ENCODE measurements at regions of chr12 and their contacts with region 1.

Region 1: GRCh38 chr12:51172515-51173431 is at the start of gene TFCP2:
- DNase-seq: peak; percentile 98
- H3K4me3 Mint-ChIP-seq: peak within 1 kb of the TSS; percentile 80
- H3K27ac Mint-ChIP-seq: peak within 1 kb of the TSS; percentile 86
- H3K4me1 Mint-ChIP-seq: peaks cover 12% of the 10 kb centered on the region
- H3K27me3 Mint-ChIP-seq: no peaks in the 10 kb centered on the region
- total RNA-seq, gene TFCP2: 43.1 and 46.3 TPM in 2 replicates

Region 2: GRCh38 chr12:50353869-50354593 is 818.7 kb before region 1 on chr12:
- intact Hi-C with region 1: no loop called
- DNase-seq: no peak
- H3K4me3 Mint-ChIP-seq: no peak overlapping the region
- H3K27ac Mint-ChIP-seq: no peak overlapping the region
- H3K4me1 Mint-ChIP-seq: no peaks in the 10 kb centered on the region
- H3K27me3 Mint-ChIP-seq: peaks cover 4% of the 10 kb centered on the region

Region 3: GRCh38 chr12:51217968-51218606 is 45.3 kb after region 1 on chr12 and contains the start of gene POU6F1:
- intact Hi-C with region 1: loop called (anchors 1 kb)
- DNase-seq: peak; percentile 90
- H3K4me3 Mint-ChIP-seq: peak within 1 kb of the TSS; percentile 85
- H3K27ac Mint-ChIP-seq: peak within 1 kb of the TSS; percentile 88
- H3K4me1 Mint-ChIP-seq: peaks cover 13% of the 10 kb centered on the region
- H3K27me3 Mint-ChIP-seq: no peaks in the 10 kb centered on the region
- total RNA-seq, gene POU6F1: 5.1 and 9.0 TPM in 2 replicates

Measured in activated CD4-positive, alpha-beta T cell treated with anti-CD3 and anti-CD28 coated beads, Interleukin-2, amount 10 ng/mL, durations not matched to agents 24 days and 14 days (primary cell).